Ovary (tissue), 10 donors: ENCODE measurements at regions of chr19 and their contacts with region 1.

Region 1: DNA sequence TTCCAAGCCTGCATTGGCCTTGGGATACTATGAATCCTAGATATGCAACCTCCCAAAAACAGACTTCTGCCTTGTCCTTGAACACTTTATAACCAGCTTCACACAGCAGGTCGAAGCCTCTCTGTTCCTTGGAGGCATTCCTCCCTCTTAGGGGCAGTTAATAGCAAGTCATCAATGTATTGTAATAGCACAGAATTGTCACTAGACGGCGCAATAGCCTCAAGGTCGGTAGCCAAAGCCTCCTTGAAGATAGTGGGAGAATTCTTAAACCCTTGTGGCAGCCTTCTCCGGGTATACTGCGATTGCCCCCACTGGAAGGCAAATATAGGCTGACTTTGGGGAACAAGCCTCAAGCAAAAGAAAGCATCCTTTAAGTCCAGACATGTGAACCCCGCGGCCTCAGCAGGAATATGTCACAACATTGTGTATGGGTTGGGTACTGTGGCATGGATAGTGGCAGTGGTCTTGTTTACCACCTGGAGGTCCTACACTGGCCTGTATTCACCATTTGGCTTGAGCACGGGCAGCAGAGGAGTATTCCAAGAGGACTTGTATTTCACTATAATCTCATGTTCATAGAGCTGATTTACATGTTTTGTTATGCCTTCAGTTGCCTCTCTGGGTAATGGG is 61.1 kb downstream of the ZNF431 start:
- DNase-seq: no peak
- H3K4me3 ChIP-seq: no peak overlapping the region
- H3K27ac ChIP-seq: peak overlapping the region in 1 of 2 donors; percentile 3
- H3K4me1 ChIP-seq: peaks cover 30% of the 10 kb centered on the region
- H3K27me3 ChIP-seq: no peaks in the 10 kb centered on the region
- CTCF ChIP-seq: peak in 2 of 3 donors; percentile 27 to 34
- EP300 ChIP-seq: no peak
- POLR2A ChIP-seq: no peak

Region 2: DNA sequence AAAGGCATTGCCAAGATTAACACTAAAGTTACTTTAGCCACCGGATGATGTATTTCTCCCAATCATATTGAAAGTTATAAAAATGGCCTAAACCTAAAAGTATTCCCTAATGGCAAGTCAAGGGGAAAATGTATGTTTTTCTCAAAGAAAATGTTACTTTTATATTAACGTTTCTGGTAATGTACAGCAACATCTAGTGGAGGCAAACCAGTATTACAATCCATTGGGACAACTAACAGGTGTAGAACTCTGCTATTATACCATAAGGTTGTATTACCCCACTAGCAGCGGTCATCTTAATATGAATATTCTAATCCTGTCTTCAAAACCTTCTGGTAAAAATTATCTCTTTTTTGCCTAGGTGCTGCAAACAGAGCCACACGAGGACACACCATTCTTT is 495.2 kb after region 1 on chr19:
- intact Hi-C with region 1: loop called in 1 of 4 experiments (anchors 5 kb)
- DNase-seq: no peak
- H3K4me3 ChIP-seq: no peak overlapping the region
- H3K27ac ChIP-seq: no peak overlapping the region
- H3K4me1 ChIP-seq: peaks cover 8% of the 10 kb centered on the region
- H3K27me3 ChIP-seq: no peaks in the 10 kb centered on the region
- CTCF ChIP-seq: peak; percentile 32 to 84 (median 59)
- EP300 ChIP-seq: no peak
- POLR2A ChIP-seq: no peak